ENCODE measurements at regions of chr4 and their contacts with region 1.

Region 1: DNA sequence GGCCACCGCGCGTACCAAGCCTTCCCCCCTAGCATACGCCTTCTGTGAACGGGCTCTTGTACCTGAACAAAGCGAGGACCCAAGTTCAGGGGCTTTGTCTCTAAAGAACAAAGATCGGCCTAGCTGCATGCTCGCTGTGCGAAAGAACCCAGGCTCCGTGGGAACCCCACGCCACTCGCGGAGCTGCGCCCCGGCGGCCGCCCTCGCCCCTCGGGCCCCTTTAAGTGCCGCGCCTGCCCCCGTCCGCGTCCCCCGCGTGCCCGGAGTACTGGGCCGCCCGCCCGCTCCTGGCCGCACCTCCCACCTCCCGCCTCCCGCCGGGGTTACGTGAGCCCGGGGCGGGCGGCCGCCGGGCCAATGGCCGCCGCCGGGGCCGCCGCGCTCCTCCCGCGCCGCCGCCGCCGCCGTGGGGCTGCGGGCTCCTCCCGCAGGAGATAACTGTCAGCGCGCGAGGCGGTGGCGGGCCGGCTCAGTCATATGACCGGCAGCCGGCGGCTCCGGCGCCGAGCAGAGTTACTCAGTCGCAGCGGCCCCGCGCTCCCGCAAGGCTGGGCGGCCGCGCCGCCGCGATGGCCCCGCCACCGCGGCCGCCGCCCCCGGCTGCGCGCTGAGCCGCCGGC is at the start of gene FNIP2:
- DNase-seq: peak; percentile 94
- H3K4me3 Mint-ChIP-seq: peak within 1 kb of the TSS; percentile 100
- H3K27ac Mint-ChIP-seq: peak within 1 kb of the TSS; percentile 98
- H3K4me1 Mint-ChIP-seq: peaks cover 43% of the 10 kb centered on the region
- H3K27me3 Mint-ChIP-seq: no peaks in the 10 kb centered on the region
- total RNA-seq, gene FNIP2: 19.1 and 19.2 TPM in 2 replicates

Region 2: GRCh38 chr4:158530381-158530780 is 238.3 kb before region 1 on chr4:
- intact Hi-C with region 1: no loop called
- DNase-seq: no peak
- H3K4me3 Mint-ChIP-seq: no peak overlapping the region
- H3K27ac Mint-ChIP-seq: no peak overlapping the region
- H3K4me1 Mint-ChIP-seq: peaks cover 4% of the 10 kb centered on the region
- H3K27me3 Mint-ChIP-seq: peaks cover 2% of the 10 kb centered on the region

Region 3: DNA sequence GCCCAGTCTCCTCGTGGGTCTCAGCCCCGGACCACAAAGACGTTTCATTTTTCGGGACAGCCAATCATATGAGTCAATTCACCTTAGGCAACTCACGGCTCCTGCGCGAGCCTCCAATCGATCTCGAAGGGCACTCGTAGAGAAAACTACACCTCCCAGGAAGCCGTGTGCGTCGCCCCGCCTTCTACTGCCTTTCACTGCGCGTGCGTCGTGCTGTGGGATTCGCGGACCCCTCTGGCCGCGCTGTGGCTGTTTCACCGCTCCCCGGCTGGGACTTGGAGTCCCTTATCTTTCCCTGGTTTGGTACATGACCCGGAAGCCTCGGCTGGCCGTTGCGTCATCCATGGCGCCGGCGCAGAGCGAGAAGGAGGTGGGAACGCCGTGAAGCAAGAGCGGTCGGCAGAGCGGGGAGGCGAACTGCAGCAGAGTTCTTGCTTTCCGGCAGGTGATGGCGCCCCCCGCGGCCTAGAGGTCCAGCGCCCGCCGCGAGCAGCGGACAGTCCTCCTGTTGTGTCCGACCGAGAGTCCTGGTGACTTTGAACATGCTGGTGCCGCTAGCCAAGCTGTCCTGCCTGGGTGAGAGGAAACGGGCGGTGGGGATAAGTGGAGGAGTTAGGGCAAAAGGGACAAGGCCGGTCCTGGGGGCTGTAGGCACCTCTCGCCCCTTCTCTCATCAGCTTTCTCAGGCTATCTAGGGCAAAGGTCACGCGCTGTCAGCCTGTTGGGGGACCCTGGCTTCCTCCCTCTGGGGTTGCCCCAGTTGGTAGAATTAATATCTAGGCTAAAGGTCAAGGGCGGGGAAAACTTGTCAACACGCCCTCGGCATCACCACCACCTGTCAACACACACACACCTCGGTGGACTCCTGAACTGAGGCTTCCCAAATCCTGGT is 96.5 kb before region 1 on chr4 and contains the start of gene ETFDH:
- intact Hi-C with region 1: loop called (anchors 1 kb)
- DNase-seq: peak; percentile 99
- H3K4me3 Mint-ChIP-seq: peak within 1 kb of the TSS; percentile 99
- H3K27ac Mint-ChIP-seq: peak within 1 kb of the TSS; percentile 95
- H3K4me1 Mint-ChIP-seq: peaks cover 22% of the 10 kb centered on the region
- H3K27me3 Mint-ChIP-seq: peaks cover 1% of the 10 kb centered on the region
- total RNA-seq, gene ETFDH: 20.8 and 24.7 TPM in 2 replicates

Region 4: GRCh38 chr4:158722917-158723793 is 45.5 kb before region 1 on chr4 and contains the start of gene PPID:
- intact Hi-C with region 1: loop called (anchors 1 kb)
- DNase-seq: peak; percentile 96
- H3K4me3 Mint-ChIP-seq: peak within 1 kb of the TSS; percentile 95
- H3K27ac Mint-ChIP-seq: peak within 1 kb of the TSS; percentile 99
- H3K4me1 Mint-ChIP-seq: peaks cover 45% of the 10 kb centered on the region
- H3K27me3 Mint-ChIP-seq: no peaks in the 10 kb centered on the region
- total RNA-seq, gene PPID: 62.9 and 64.7 TPM in 2 replicates

Region 5: DNA sequence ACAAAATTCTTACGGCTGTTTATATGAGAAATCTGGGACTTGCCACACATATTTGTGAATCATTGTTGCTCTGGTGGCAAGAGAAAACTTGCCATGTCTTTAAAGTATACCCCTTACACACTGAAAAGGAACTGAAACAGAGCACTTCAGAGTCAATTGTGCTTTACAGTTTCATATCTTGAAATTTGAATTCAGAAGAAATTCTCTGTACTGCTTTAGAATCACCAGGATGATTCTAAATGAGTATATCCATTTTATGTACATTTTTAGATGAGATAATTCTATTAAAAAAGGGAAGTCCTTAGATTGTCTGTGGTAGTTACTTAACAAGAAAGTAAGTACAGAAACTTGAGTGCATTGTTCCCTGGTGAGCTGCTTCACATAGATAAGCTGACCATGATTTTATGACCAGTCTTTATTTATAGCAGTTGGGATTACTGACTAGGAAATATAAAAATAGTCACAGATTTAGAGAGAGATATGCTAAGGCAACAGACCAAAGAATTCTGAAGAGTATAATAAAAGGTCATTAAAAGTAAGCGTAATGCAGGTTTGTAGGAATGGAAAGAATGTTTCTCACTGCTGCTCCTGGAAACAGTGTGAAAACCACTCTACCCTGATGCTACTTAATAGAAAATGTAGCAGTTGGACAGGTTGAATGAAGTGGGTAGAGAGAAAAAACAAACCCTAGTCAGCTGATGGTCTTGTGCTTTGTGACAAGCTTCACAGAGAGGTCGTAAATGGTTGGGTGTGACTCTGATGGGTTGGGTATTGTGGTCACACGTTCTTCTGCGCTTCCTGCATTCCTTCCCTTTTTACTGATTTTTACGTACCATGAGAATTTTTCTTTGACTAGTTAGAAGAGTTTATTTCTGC is 41.2 kb after region 1 on chr4:
- intact Hi-C with region 1: loop called (anchors 2 kb)
- DNase-seq: peak; percentile 70
- H3K4me3 Mint-ChIP-seq: peak overlapping the region; percentile 70
- H3K27ac Mint-ChIP-seq: peak overlapping the region; percentile 87
- H3K4me1 Mint-ChIP-seq: peaks cover 53% of the 10 kb centered on the region
- H3K27me3 Mint-ChIP-seq: no peaks in the 10 kb centered on the region

Region 6: DNA sequence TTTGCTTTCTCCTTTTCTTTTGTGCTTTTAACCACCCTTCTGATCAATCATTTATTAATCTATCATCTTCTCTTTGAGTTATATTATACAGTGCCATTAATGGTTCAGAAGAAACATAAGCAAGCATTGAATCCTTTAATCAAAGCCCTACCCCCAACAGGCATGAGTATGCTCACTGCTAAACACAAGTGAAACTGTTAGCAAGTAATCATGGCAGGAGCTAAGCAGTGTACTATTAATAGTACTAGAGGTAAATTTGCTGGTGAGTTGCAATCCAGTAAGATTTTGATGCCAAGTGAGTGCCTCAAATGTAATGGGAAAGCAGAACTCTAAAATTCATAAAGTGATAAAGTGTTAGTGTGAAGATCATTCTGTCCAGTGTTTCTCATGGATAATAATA is 57.4 kb after region 1 on chr4:
- intact Hi-C with region 1: loop called (anchors 1 kb)
- DNase-seq: peak; percentile 60
- H3K4me3 Mint-ChIP-seq: peak overlapping the region; percentile 60
- H3K27ac Mint-ChIP-seq: peak overlapping the region; percentile 69
- H3K4me1 Mint-ChIP-seq: peaks cover 65% of the 10 kb centered on the region
- H3K27me3 Mint-ChIP-seq: no peaks in the 10 kb centered on the region

Region 7: DNA sequence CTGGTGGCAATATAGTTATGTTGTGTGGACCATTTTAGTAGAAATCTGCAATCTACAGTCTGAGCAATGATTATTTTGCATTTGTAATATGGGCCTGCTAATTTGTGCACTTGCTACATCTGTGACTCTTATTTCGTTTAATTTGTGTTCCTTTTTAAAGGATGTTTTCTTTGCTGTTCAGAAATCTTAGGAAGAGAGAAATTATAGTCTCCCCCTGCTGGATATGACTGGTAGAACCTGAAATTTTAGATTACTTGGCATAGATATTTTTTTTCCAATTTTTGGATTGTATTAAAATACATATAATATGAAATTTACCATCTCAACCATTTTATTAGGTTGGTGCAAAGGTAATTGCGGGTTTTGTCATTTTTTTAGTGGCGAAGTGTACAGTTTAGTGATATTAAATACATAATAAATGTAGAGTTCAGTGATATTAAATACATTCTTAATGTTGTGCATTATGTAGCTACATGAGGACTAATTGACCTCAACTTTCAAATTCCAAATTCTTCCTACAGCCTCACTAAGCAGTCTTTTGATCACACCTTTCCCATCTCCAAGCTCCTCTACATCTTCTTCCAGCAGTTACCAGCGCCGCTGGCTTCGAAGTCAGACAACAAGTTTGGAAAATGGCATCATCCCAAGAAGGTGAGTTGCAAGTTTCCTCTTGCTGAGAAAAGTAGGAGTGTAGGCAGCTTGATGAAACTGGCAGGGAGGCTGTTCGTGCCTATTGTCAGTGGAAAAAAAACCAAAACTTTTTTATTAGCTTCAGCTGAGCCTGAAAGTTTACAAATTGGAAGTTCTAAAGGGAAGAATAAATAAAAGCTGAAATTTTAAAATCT is 82.4 kb after region 1 on chr4:
- intact Hi-C with region 1: loop called (anchors 2 kb)
- DNase-seq: no peak
- H3K4me3 Mint-ChIP-seq: no peak overlapping the region
- H3K27ac Mint-ChIP-seq: no peak overlapping the region
- H3K4me1 Mint-ChIP-seq: peaks cover 17% of the 10 kb centered on the region
- H3K27me3 Mint-ChIP-seq: no peaks in the 10 kb centered on the region